Left cardiac atrium (tissue), 4 donors: ENCODE measurements at regions of chr6 and their contacts with region 1.

Region 1: GRCh38 chr6:30626484-30627366 is at the start of gene ATAT1:
- DNase-seq: peak; percentile 92
- ATAC-seq: peak; percentile 97 to 99
- total RNA-seq, gene ATAT1: 2.7 to 3.8 TPM

Region 2: GRCh38 chr6:30672445-30673253 is 45.9 kb after region 1 on chr6 and contains the start of gene DHX16:
- intact Hi-C with region 1: loop called in 1 of 2 experiments (anchors 5 kb)
- DNase-seq: peak; percentile 97
- ATAC-seq: peak; percentile 91 to 94
- total RNA-seq, gene DHX16: 17.6 to 18.6 TPM